ENCODE measurements at regions of chr1 and their contacts with region 1.

Region 1: GRCh38 chr1:206106328-206107167 is 10.6 kb downstream of the AVPR1B start:
- DNase-seq: peak; percentile 77 to 85
- ATAC-seq: peak; percentile 83 to 94 (median 90)
- H3K4me3 ChIP-seq: no peak overlapping the region
- H3K27ac ChIP-seq: no peak overlapping the region
- H3K4me1 ChIP-seq: no peaks in the 10 kb centered on the region
- H3K27me3 ChIP-seq: no peaks in the 10 kb centered on the region
- CTCF ChIP-seq: peak; percentile 88

Region 2: GRCh38 chr1:205791568-205792180 is 314.9 kb before region 1 on chr1:
- intact Hi-C with region 1: loop called (anchors 5 kb)
- DNase-seq: peak; percentile 55 to 75
- ATAC-seq: peak; percentile 82 to 90 (median 84)
- H3K4me3 ChIP-seq: no peak overlapping the region
- H3K27ac ChIP-seq: peak overlapping the region; percentile 43
- H3K4me1 ChIP-seq: peaks cover 12% of the 10 kb centered on the region
- H3K27me3 ChIP-seq: no peaks in the 10 kb centered on the region
- CTCF ChIP-seq: peak; percentile 77

Region 3: DNA sequence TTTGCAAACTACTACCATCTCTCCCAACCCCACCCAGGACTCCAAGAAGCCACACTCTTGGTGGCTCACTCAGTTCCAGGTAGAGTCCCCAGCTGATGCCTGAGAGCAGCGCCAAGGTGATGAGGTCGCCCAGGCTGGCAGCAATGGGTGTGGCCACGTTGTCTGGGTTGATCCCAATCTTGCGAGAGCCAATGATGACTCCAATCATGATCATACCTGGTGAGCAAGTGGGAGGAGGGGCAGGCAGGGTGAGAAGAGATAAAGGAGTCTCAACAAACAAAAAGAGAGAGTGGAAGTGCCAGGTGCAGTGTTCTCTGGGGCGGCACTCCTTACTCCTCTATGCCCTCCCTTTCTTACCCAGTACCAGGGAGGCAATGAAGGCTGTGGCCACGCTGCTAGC is 307.9 kb before region 1 on chr1:
- intact Hi-C with region 1: loop called (anchors 5 kb)
- DNase-seq: no peak
- ATAC-seq: no peak
- H3K4me3 ChIP-seq: no peak overlapping the region
- H3K27ac ChIP-seq: no peak overlapping the region
- H3K4me1 ChIP-seq: no peaks in the 10 kb centered on the region
- H3K27me3 ChIP-seq: no peaks in the 10 kb centered on the region
- CTCF ChIP-seq: no peak

Region 4: DNA sequence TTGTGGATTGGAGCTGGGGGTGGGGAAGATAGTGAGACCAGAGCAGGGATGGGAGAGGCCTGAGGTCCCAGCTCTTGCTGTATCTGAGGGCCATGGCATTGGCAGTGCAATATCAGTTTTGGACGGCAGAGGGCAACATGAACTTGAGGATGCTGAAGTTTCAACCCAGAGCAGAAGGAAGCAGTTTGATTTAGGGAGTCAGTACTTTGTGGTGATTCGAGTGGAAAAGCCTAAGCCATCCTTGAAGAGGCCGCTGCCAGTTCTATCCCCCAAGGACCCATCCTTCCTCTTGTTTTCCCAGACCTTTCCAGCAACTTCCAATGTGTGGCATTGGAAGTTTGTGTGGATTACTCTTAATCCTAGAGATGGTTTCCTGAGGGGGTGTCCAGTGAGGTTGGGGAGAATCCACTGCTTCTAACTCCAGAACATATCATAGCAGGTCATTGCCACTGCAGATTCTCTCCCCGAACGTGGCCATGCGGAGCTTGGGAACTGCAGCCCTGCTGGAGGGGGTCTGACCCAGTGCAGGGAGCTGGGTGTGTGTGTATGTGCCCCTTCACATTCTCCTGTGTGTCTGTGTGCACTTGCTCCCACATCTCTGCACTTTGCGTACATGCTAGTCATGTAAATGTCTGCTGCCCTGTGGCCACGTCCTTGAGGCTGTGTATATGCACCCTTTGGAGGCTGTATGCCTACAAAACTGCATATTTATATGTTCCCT is 187.4 kb before region 1 on chr1:
- intact Hi-C with region 1: loop called (anchors 5 kb)
- DNase-seq: peak; percentile 73 to 86
- ATAC-seq: peak; percentile 68 to 80 (median 74)
- H3K4me3 ChIP-seq: no peak overlapping the region
- H3K27ac ChIP-seq: peak overlapping the region; percentile 59
- H3K4me1 ChIP-seq: peaks cover 46% of the 10 kb centered on the region
- H3K27me3 ChIP-seq: no peaks in the 10 kb centered on the region
- CTCF ChIP-seq: peak; percentile 93

Region 5: GRCh38 chr1:205983925-205984725 is 122.4 kb before region 1 on chr1:
- intact Hi-C with region 1: loop called (anchors 1 to 2 kb)
- DNase-seq: peak; percentile 63 to 83
- ATAC-seq: peak; percentile 79 to 89 (median 84)
- H3K4me3 ChIP-seq: no peak overlapping the region
- H3K27ac ChIP-seq: no peak overlapping the region
- H3K4me1 ChIP-seq: no peaks in the 10 kb centered on the region
- H3K27me3 ChIP-seq: no peaks in the 10 kb centered on the region
- CTCF ChIP-seq: peak; percentile 64

Region 6: GRCh38 chr1:206030714-206031113 is 75.8 kb before region 1 on chr1:
- intact Hi-C with region 1: loop called in 1 of 2 experiments (anchors 5 kb)
- DNase-seq: peak in 1 of 2 donors; percentile 37
- ATAC-seq: peak; percentile 66 to 80 (median 68)
- H3K4me3 ChIP-seq: no peak overlapping the region
- H3K27ac ChIP-seq: no peak overlapping the region
- H3K4me1 ChIP-seq: no peaks in the 10 kb centered on the region
- H3K27me3 ChIP-seq: no peaks in the 10 kb centered on the region
- CTCF ChIP-seq: peak; percentile 66

Measured in psoas muscle (tissue), 8 donors.